ENCODE measurements at regions of chr15 and their contacts with region 1.

Region 1: DNA sequence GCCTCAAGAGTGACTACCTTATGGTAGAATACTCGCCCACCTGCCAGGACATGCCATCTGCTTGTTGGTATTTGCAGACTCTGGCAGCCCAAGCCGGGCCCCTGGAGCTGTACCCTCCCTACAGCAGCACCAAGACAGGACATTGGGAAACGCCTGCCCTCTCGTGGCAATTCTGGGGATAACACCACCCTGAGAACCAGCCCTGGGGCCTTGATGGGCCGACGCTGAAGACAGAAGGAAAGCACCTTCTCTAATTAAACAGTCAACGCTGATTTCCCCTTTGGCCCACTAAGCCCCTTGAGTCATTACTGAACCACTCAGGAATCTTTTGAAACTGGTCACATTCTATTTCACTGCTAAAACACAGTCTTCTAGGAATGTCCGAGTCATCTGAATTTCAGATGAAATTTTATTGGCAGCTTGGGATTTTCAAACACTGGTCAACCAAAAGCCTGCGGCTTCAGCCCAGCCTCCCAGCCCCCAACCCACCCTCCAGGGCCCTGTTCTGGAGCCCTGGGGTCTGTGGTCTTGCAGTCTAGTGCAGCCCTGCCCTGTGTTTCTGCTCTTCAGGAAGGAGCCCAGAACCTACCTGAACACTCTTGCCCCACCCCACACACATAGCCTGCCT is 91.3 kb downstream of the TMEM266 start:
- DNase-seq: peak; percentile 90
- H3K4me3 Mint-ChIP-seq: no peak overlapping the region
- H3K27ac Mint-ChIP-seq: no peak overlapping the region
- H3K4me1 Mint-ChIP-seq: peaks cover 23% of the 10 kb centered on the region
- H3K27me3 Mint-ChIP-seq: peaks cover 8% of the 10 kb centered on the region

Region 2: DNA sequence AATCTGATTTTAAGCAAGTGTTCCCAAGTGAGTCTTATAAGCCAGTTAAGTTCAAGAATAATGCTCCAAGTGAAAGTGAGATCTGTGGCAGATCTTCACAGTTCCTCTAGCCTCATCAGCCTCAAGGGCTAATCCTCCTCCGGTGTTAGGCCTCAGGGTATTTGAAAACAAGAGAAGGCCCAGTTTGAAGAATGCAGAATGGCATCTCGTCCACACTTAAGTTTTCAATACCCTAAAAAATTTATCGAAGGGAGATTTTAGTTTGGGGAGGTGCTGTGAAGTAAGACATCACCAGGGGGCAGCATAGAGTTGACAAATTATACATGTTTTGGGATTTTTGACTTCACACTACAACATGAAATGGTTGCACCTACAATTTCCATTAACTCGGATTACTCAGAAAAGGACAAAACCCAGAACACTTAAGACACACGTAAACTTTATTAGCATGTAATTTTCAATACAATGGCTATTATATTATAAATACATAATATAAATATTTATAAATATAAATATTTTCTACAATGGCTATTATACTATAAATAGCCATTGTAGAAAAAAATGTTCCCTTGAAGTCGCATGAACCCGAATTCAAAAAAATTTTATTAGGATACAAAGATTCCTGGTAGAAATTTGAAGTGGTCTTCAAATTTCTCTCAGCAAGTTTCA is 93.6 kb before region 1 on chr15:
- CTCF ChIA-PET with region 1: interaction called, 441 read pairs
- POLR2A ChIA-PET with region 1: no interaction called
- intact Hi-C with region 1: loop called (anchors 5 kb)
- DNase-seq: peak; percentile 45
- H3K4me3 Mint-ChIP-seq: no peak overlapping the region
- H3K27ac Mint-ChIP-seq: no peak overlapping the region
- H3K4me1 Mint-ChIP-seq: peaks cover 19% of the 10 kb centered on the region
- H3K27me3 Mint-ChIP-seq: peaks cover 44% of the 10 kb centered on the region

Region 3: GRCh38 chr15:76065267-76065666 is 85.8 kb before region 1 on chr15:
- CTCF ChIA-PET with region 1: interaction called, 441 read pairs
- POLR2A ChIA-PET with region 1: no interaction called
- intact Hi-C with region 1: no loop called
- DNase-seq: peak; percentile 39
- H3K4me3 Mint-ChIP-seq: no peak overlapping the region
- H3K27ac Mint-ChIP-seq: no peak overlapping the region
- H3K4me1 Mint-ChIP-seq: peaks cover 12% of the 10 kb centered on the region
- H3K27me3 Mint-ChIP-seq: peaks cover 39% of the 10 kb centered on the region

Measured in activated CD4-positive, alpha-beta memory T cell treated with anti-CD3 and anti-CD28 coated beads for 36 hours (primary cell).